ENCODE measurements at regions of chr13 and their contacts with region 1.

Region 1: GRCh38 chr13:78593652-78594455 is 9.5 kb downstream of the POU4F1 start:
- DNase-seq: peak in 1 of 14 experiments; percentile 3
- ATAC-seq: no peak
- H3K4me3 ChIP-seq: no peak overlapping the region
- H3K4me3 Mint-ChIP-seq: no peak overlapping the region
- H3K27ac ChIP-seq: no peak overlapping the region
- H3K27ac Mint-ChIP-seq: peak overlapping the region; percentile 56
- H3K4me1 ChIP-seq: peaks cover 16% of the 10 kb centered on the region
- H3K4me1 Mint-ChIP-seq: peaks cover 8% of the 10 kb centered on the region
- H3K27me3 ChIP-seq: peaks cover 72 to 99% of the 10 kb centered on the region in 2 experiments
- H3K27me3 Mint-ChIP-seq: peaks cover 96% of the 10 kb centered on the region
- CTCF ChIP-seq: no peak

Region 2: GRCh38 chr13:78576261-78576660 is 17.6 kb before region 1 on chr13:
- CTCF ChIA-PET with region 1: no interaction called
- POLR2A ChIA-PET with region 1: no interaction called
- intact Hi-C with region 1: no loop called
- DNase-seq: no peak
- ATAC-seq: no peak
- H3K4me3 ChIP-seq: no peak overlapping the region
- H3K4me3 Mint-ChIP-seq: no peak overlapping the region
- H3K27ac ChIP-seq: no peak overlapping the region
- H3K27ac Mint-ChIP-seq: no peak overlapping the region
- H3K4me1 ChIP-seq: no peaks in the 10 kb centered on the region
- H3K4me1 Mint-ChIP-seq: no peaks in the 10 kb centered on the region
- H3K27me3 ChIP-seq: peaks cover 8 to 16% of the 10 kb centered on the region in 2 experiments
- H3K27me3 Mint-ChIP-seq: peaks cover 52% of the 10 kb centered on the region
- CTCF ChIP-seq: no peak

Region 3: GRCh38 chr13:78609464-78610205 is 15.8 kb after region 1 on chr13:
- CTCF ChIA-PET with region 1: interaction called, 3 read pairs
- POLR2A ChIA-PET with region 1: no interaction called
- intact Hi-C with region 1: loop called in 1 of 2 experiments (anchors 2 kb)
- DNase-seq: no peak
- ATAC-seq: no peak
- H3K4me3 ChIP-seq: peak overlapping the region; percentile 46
- H3K4me3 Mint-ChIP-seq: peak overlapping the region; percentile 77
- H3K27ac ChIP-seq: no peak overlapping the region
- H3K27ac Mint-ChIP-seq: no peak overlapping the region
- H3K4me1 ChIP-seq: peaks cover 39% of the 10 kb centered on the region
- H3K4me1 Mint-ChIP-seq: peaks cover 23% of the 10 kb centered on the region
- H3K27me3 ChIP-seq: peaks cover 57 to 58% of the 10 kb centered on the region in 2 experiments
- H3K27me3 Mint-ChIP-seq: peaks cover 59% of the 10 kb centered on the region
- CTCF ChIP-seq: no peak